ENCODE measurements at regions of chrX and their contacts with region 1.

Region 1: GRCh38 chrX:114959729-114960128 is 57.7 kb downstream of the IL13RA2 start:
- DNase-seq: no peak
- H3K4me3 ChIP-seq: no peak overlapping the region
- H3K27ac ChIP-seq: no peak overlapping the region
- H3K4me1 ChIP-seq: no peaks in the 10 kb centered on the region
- H3K27me3 ChIP-seq: no peaks in the 10 kb centered on the region
- CTCF ChIP-seq: no peak
- POLR2A ChIP-seq: no peak

Region 2: DNA sequence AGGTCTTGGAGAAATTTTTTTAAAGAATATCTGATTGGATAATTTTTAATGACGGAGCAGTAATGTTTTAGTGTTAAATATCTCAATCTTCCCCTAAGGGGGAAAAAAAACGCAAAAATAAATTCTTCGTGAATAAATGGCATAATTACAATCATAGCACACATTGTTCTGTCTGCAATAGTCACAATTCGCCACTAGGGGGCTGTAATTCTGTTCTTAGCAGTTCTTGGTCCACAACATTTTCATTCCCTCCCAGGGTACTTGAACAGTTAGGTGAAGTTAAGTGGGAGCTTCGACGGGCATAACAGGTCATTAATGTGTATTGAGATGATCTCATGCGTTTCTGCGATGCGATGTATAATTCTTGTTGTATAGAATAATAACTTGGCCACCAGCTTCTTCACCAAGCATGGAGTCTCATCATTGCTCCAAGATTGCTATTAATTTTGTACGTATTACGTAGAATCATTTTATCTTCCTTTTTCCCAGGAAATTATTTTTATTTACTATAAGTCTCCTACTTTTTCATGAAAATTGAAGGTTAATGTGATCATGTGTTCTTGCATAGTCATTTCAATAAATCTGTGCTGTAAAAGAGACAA is 348.6 kb before region 1 on chrX:
- CTCF ChIA-PET with region 1: interaction called, 12 read pairs
- POLR2A ChIA-PET with region 1: no interaction called
- dilution Hi-C with region 1: no loop called
- intact Hi-C with region 1: loop called (anchors 5 kb)
- DNase-seq: peak; percentile 31
- H3K4me3 ChIP-seq: no peak overlapping the region
- H3K27ac ChIP-seq: no peak overlapping the region
- H3K4me1 ChIP-seq: no peaks in the 10 kb centered on the region
- H3K27me3 ChIP-seq: no peaks in the 10 kb centered on the region
- CTCF ChIP-seq: peak; percentile 40 to 50
- POLR2A ChIP-seq: no peak

Region 3: GRCh38 chrX:114626323-114626722 is 333.4 kb before region 1 on chrX:
- CTCF ChIA-PET with region 1: interaction called, 60 read pairs
- POLR2A ChIA-PET with region 1: no interaction called
- dilution Hi-C with region 1: no loop called
- intact Hi-C with region 1: loop called (anchors 5 kb)
- DNase-seq: peak; percentile 4
- H3K4me3 ChIP-seq: no peak overlapping the region
- H3K27ac ChIP-seq: no peak overlapping the region
- H3K4me1 ChIP-seq: no peaks in the 10 kb centered on the region
- H3K27me3 ChIP-seq: no peaks in the 10 kb centered on the region
- CTCF ChIP-seq: peak in 1 of 2 donors; percentile 24
- POLR2A ChIP-seq: no peak

Region 4: GRCh38 chrX:114999906-115000305 is 40.2 kb after region 1 on chrX:
- CTCF ChIA-PET with region 1: no interaction called
- POLR2A ChIA-PET with region 1: no interaction called
- dilution Hi-C with region 1: no loop called
- intact Hi-C with region 1: no loop called
- DNase-seq: no peak
- H3K4me3 ChIP-seq: no peak overlapping the region
- H3K27ac ChIP-seq: no peak overlapping the region
- H3K4me1 ChIP-seq: no peaks in the 10 kb centered on the region
- H3K27me3 ChIP-seq: no peaks in the 10 kb centered on the region
- CTCF ChIP-seq: no peak
- POLR2A ChIP-seq: no peak

Region 5: DNA sequence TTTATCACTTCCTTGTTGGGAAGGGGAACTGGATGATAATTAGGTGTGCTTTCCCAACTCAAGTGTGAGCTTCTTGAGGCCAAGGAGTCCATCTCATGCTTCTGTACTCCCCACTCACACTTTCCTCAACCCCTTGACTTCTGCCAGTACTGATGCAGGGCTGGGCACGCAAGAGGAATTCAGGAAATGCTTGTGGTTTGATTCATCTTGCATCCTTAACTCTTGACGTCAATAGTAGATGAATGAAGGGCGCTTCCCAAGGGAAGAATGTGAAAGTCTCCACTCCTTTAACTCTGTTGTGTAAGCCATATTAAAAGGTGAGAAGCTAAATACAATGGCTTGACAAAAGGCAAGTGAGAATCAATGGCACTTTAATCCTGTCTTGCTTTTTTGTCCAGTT is 1312.6 kb after region 1 on chrX:
- CTCF ChIA-PET with region 1: no interaction called
- POLR2A ChIA-PET with region 1: no interaction called
- dilution Hi-C with region 1: no loop called
- intact Hi-C with region 1: no loop called
- DNase-seq: peak; percentile 31
- H3K4me3 ChIP-seq: no peak overlapping the region
- H3K27ac ChIP-seq: peak overlapping the region; percentile 41
- H3K4me1 ChIP-seq: no peaks in the 10 kb centered on the region
- H3K27me3 ChIP-seq: no peaks in the 10 kb centered on the region
- CTCF ChIP-seq: no peak
- POLR2A ChIP-seq: no peak